Activated CD4-positive, alpha-beta memory T cell treated with anti-CD3 and anti-CD28 coated beads for 36 hours (primary cell): ENCODE measurements at regions of chr11 and their contacts with region 1.

Region 1: GRCh38 chr11:95641495-95641894 is 148.1 kb downstream of the FAM76B start:
- DNase-seq: peak; percentile 35
- H3K4me3 Mint-ChIP-seq: peak overlapping the region; percentile 32
- H3K27ac Mint-ChIP-seq: peak overlapping the region; percentile 4
- H3K4me1 Mint-ChIP-seq: peaks cover 14% of the 10 kb centered on the region
- H3K27me3 Mint-ChIP-seq: no peaks in the 10 kb centered on the region

Region 2: GRCh38 chr11:95531116-95531515 is 110.4 kb before region 1 on chr11:
- CTCF ChIA-PET with region 1: no interaction called
- POLR2A ChIA-PET with region 1: no interaction called
- intact Hi-C with region 1: no loop called
- DNase-seq: no peak
- H3K4me3 Mint-ChIP-seq: no peak overlapping the region
- H3K27ac Mint-ChIP-seq: no peak overlapping the region
- H3K4me1 Mint-ChIP-seq: peaks cover 6% of the 10 kb centered on the region
- H3K27me3 Mint-ChIP-seq: no peaks in the 10 kb centered on the region

Region 3: DNA sequence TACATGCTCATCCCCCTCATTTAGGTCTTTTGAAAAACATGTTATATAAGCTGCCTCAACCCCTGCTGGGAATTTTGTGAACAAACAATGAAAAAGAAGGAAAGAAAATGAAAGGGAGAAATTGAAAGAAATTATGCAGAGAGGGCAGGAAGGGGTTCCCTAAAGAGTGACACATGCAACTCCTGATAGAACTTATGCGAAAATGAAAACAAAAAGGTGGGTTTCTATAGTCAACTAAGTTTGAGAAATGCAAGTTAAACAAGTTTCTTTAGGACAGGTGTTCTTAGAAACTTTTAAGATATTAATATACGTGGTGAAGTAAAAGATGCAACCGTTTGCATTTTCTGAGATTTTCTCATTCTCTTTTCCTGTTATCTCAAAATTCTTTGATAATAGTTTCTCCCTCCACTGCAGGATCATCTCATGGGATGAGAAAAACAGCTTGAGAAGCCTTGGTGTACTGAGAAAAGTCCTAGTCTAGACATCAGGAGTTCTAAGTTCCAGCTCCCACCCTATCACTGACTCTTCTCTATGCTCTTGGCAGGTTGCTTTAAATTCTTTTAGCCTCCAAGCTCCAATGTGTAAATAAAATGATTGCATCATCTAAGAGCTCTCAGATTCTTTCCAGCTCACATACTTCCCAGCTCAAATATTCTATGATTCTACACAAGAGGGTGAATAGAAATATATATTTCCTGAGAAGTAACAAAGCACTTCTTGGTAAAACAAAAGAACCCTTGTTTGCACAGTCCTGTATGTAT is 38.9 kb after region 1 on chr11:
- CTCF ChIA-PET with region 1: interaction called, 4 read pairs
- POLR2A ChIA-PET with region 1: no interaction called
- intact Hi-C with region 1: loop called (anchors 5 kb)
- DNase-seq: no peak
- H3K4me3 Mint-ChIP-seq: peak overlapping the region; percentile 9
- H3K27ac Mint-ChIP-seq: peak overlapping the region; percentile 45
- H3K4me1 Mint-ChIP-seq: peaks cover 85% of the 10 kb centered on the region
- H3K27me3 Mint-ChIP-seq: no peaks in the 10 kb centered on the region